Activated CD4-positive, alpha-beta T cell treated with anti-CD3 and anti-CD28 coated beads for 36 hours (primary cell): ENCODE measurements at regions of chr19 and their contacts with region 1.

Region 1: DNA sequence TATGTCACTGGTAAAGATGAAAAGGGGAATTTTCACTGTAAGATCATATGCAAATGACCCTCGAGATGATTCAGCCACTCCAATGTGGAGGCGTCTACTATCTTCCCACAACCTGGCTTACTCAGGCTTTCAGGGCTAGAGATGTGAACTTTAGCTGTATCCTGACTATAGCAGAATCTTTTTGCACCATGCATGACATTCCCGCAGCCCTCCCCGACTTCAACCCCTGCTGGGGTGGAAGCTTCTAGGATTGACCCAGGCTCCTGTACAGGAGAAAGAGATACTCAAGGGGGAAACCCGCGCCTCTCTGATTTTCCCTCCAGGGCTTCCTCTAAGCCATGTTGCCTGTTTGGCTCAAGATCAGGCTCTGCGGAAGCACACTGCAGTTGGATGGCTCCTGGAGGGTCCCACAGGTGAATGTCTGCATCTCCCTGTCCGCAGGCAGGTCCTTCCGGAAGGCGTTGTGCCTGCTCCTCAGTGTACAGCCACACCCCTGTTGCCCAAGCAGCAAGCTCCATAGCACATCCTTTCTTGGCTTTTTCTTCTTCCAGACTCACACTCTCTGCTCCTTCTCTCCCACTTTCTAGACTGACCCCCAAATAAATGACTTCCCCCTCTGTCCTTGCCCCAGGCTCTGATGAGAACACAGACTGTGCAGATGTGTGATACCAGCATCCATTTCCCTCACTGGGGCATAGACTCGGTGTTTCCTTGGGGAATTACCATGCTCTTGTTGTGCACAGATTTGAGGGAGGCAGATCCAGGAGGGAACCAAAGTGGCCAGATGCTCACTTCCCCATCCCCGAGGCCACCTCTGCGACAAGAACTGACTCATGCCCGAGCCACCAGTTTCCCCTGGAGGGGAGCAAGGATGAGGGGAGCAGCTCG is 29.1 kb upstream of the POP4 start:
- DNase-seq: peak; percentile 70
- ATAC-seq: peak; percentile 98
- H3K4me3 Mint-ChIP-seq: no peak overlapping the region
- H3K27ac Mint-ChIP-seq: no peak overlapping the region
- H3K4me1 Mint-ChIP-seq: peaks cover 26% of the 10 kb centered on the region
- H3K27me3 Mint-ChIP-seq: peaks cover 59% of the 10 kb centered on the region

Region 2: GRCh38 chr19:29212648-29213573 is 364.1 kb before region 1 on chr19 and contains the start of gene UQCRFS1:
- CTCF ChIA-PET with region 1: no interaction called
- POLR2A ChIA-PET with region 1: no interaction called
- intact Hi-C with region 1: loop called in 1 of 2 experiments (anchors 2 kb)
- DNase-seq: peak; percentile 98
- ATAC-seq: peak; percentile 98
- H3K4me3 Mint-ChIP-seq: peak within 1 kb of the TSS; percentile 95
- H3K27ac Mint-ChIP-seq: peak within 1 kb of the TSS; percentile 95
- H3K4me1 Mint-ChIP-seq: peaks cover 48% of the 10 kb centered on the region
- H3K27me3 Mint-ChIP-seq: peaks cover 3% of the 10 kb centered on the region
- total RNA-seq, gene UQCRFS1: 39.1 to 45.3 TPM

Region 3: GRCh38 chr19:29564574-29565005 is 12.4 kb before region 1 on chr19:
- CTCF ChIA-PET with region 1: interaction called, 3 read pairs
- POLR2A ChIA-PET with region 1: no interaction called
- intact Hi-C with region 1: loop called in 1 of 2 experiments (anchors 1 kb)
- DNase-seq: peak; percentile 26
- ATAC-seq: peak; percentile 76
- H3K4me3 Mint-ChIP-seq: no peak overlapping the region
- H3K27ac Mint-ChIP-seq: no peak overlapping the region
- H3K4me1 Mint-ChIP-seq: peaks cover 12% of the 10 kb centered on the region
- H3K27me3 Mint-ChIP-seq: peaks cover 30% of the 10 kb centered on the region

Region 4: DNA sequence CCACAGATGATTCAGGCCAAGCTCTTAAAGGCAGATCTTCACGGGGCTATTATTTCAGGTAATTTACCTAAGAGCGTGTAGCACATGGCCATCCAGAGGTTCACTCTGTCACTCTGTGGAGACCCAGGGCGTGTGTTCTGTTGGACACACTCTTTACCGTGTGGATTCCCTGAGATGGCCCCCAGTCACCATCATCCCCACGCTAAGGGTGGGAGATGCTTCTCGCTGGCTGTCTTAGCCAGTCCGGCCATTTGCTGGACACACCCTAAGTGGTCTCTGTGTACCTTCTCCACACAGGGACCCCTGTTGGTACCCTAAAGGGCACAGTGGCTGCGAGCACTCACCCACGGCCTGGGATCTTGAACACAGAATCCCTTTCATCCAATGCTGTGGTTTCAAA is 35.1 kb after region 1 on chr19:
- CTCF ChIA-PET with region 1: no interaction called
- POLR2A ChIA-PET with region 1: no interaction called
- intact Hi-C with region 1: no loop called
- DNase-seq: no peak
- ATAC-seq: no peak
- H3K4me3 Mint-ChIP-seq: no peak overlapping the region
- H3K27ac Mint-ChIP-seq: no peak overlapping the region
- H3K4me1 Mint-ChIP-seq: peaks cover 7% of the 10 kb centered on the region
- H3K27me3 Mint-ChIP-seq: no peaks in the 10 kb centered on the region

Region 5: DNA sequence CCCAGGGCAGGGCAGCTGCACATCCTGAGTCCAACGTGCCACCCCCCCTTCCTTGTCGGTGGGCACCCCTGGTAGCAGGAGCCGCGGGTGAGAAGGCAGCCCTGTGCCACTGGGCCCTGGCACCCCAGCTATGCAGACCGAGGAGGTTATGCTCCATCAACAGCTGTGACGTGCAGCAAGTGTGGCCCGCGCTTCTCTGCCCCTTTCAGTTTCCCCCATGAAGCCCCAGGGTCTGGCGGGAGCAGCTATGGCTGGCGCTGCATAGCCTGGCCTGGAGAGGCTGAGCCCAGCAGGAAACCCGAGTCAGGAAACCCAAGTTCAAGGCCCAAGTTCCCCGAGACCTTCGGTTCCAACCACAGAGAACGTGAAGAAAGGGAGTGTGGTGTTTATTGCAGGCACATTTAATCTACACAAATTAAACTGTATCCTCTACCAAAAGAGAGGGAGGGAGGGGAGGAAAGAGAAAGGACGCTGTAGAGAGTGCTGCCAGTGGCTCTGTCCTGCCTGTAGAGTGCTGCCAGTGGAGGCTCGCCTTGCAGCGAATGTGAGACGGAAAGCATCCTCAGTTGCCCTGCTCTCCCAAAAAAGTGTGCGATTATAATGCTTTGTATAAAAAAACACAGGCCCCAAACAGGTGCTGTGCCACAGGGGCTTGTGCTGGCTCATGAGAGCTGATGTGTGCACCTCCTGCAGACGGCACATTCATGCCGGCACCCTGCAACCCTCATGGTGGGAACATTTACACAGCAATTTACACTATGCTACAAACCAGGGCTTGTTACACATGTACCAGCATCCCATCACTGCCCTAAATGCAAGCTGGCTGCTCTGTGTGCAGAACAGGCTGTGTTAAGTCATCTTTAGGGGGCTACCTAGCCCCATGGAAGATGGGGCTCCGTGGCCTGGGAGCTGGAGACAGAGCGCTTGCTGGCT is 45.4 kb after region 1 on chr19:
- CTCF ChIA-PET with region 1: no interaction called
- POLR2A ChIA-PET with region 1: no interaction called
- intact Hi-C with region 1: loop called in 1 of 2 experiments (anchors 1 kb)
- DNase-seq: peak; percentile 65
- ATAC-seq: peak; percentile 53
- H3K4me3 Mint-ChIP-seq: peak overlapping the region; percentile 20
- H3K27ac Mint-ChIP-seq: peak overlapping the region; percentile 63
- H3K4me1 Mint-ChIP-seq: peaks cover 51% of the 10 kb centered on the region
- H3K27me3 Mint-ChIP-seq: no peaks in the 10 kb centered on the region

Region 6: DNA sequence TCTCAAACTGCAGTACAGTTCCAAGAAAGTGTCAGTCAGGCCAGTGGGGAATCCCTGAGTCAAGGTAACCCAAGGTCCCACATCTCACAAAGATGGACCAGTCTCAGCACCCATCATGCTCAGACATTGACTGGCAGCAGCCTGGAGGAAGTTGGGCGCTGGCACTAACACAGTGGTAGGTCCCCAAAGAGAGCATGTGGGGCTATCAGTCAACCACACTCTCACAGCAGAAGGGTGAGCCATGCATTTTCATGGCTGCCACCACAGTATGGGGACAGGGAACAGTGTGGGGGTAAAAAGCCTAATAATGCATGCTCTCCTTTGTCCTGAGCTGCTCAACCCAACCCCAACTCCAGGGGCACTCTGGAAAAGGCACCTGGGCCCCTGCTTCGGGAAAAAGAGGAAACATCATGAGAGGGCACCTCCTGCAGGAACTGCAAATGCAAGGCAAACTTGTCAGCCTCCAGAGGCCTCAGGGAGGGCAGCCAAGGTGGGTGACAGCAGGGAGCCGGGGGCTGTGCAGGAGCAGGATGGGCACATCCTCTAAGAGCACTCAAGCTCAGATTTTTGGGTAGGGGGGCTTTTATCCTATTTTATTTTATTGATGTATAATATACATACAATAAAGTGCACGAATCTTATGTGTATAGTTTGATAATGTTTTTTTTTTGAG is 78.8 kb after region 1 on chr19:
- CTCF ChIA-PET with region 1: no interaction called
- POLR2A ChIA-PET with region 1: no interaction called
- intact Hi-C with region 1: no loop called
- DNase-seq: no peak
- ATAC-seq: no peak
- H3K4me3 Mint-ChIP-seq: no peak overlapping the region
- H3K27ac Mint-ChIP-seq: no peak overlapping the region
- H3K4me1 Mint-ChIP-seq: peaks cover 10% of the 10 kb centered on the region
- H3K27me3 Mint-ChIP-seq: no peaks in the 10 kb centered on the region